Heart right ventricle (tissue), 16 donors: ENCODE measurements at regions of chr16 and their contacts with region 1.

Region 1: DNA sequence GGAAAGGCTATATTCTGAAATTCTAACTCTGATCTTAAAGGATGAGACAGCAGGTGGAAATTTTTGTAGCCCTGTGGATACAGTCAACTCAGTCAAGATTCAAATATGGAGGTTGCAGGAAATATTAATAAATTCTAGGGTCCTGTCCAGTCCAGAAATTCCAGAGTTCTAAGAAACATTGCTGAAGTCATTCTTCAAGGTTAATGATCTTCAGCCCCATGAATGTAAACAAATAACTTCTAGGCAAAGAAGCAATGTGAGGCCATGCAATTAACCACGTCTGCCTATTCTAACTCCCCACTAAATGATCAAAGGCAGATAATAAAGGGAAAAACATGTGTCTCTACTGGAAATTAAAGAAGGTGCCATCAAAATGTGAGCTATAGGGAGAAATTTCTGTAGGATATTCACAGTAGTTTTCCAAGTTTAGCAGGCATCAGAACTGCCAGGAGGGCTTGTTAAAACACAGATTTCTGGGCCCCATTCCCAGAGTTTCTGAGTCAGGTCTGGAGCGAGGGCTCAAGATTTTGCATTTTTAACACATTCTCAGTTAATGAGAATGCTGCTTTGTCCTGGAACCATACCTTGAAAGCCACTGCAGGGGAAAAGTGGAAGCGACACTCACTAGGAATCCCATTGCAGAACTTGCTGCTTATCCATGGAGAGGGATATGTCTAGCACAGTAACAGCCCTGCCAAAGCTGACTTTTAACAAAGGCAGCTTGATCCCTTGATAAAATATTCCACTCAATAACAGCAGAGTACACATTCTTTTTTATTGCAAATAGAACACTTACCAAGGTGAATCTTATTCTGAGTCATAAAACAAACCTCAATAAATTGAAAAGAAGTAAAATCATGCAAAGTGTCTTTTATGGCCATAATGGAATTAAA is 61.8 kb downstream of the DNAH3 start:
- DNase-seq: no peak
- ATAC-seq: no peak
- H3K4me3 ChIP-seq: no peak overlapping the region
- H3K27ac ChIP-seq: no peak overlapping the region
- H3K4me1 ChIP-seq: no peaks in the 10 kb centered on the region
- H3K27me3 ChIP-seq: no peaks in the 10 kb centered on the region
- CTCF ChIP-seq: no peak

Region 2: DNA sequence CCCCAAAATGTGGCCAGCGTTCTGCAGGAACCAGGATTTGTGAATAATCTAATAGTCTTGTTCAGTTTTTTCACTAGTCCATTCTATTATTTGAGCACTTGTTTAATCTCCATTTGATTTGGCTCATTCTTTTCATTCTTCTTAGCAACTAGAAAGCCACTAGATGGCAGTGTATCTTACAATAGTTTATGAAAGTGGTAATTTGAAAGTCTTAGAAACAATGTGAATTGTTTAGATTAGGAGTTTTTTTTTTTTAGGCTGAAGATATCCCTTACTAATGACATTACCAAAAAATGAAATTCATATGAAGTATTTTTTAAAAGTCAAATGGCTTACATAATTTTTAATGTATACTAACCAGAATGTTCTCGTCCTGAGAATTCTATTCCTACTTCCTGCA is 289.3 kb before region 1 on chr16:
- intact Hi-C with region 1: loop called in 4 of 10 experiments (anchors 2 to 10 kb)
- DNase-seq: no peak
- ATAC-seq: peak in 1 of 8 donors; percentile 53
- H3K4me3 ChIP-seq: no peak overlapping the region
- H3K27ac ChIP-seq: no peak overlapping the region
- H3K4me1 ChIP-seq: peaks cover 0 to 10% (median 0%) of the 10 kb centered on the region in 9 donors
- H3K27me3 ChIP-seq: no peaks in the 10 kb centered on the region
- CTCF ChIP-seq: peak in 8 of 9 donors; percentile 35 to 73 (median 54)

Region 3: DNA sequence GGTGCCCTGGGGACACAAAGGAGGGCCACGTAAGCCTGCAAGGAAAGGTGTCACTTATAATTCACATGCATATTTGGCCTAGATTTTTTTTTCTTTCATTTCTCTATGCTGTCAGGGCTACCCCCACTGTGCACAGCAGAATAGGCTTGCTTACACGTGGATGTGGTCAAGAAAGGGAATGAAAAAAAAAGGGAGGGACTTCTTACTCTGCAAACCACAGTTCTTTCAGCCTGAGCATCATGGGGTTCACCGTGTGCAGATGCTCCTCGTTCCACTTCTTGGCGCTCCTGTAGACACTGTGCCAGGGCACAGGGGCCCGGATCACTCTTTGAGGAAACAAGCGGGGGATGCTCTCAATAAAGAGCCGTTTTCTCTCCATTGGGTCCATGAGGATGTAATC is 45.2 kb after region 1 on chr16:
- intact Hi-C with region 1: no loop called
- DNase-seq: no peak
- ATAC-seq: no peak
- H3K4me3 ChIP-seq: no peak overlapping the region
- H3K27ac ChIP-seq: no peak overlapping the region
- H3K4me1 ChIP-seq: no peaks in the 10 kb centered on the region
- H3K27me3 ChIP-seq: no peaks in the 10 kb centered on the region
- CTCF ChIP-seq: no peak

Region 4: DNA sequence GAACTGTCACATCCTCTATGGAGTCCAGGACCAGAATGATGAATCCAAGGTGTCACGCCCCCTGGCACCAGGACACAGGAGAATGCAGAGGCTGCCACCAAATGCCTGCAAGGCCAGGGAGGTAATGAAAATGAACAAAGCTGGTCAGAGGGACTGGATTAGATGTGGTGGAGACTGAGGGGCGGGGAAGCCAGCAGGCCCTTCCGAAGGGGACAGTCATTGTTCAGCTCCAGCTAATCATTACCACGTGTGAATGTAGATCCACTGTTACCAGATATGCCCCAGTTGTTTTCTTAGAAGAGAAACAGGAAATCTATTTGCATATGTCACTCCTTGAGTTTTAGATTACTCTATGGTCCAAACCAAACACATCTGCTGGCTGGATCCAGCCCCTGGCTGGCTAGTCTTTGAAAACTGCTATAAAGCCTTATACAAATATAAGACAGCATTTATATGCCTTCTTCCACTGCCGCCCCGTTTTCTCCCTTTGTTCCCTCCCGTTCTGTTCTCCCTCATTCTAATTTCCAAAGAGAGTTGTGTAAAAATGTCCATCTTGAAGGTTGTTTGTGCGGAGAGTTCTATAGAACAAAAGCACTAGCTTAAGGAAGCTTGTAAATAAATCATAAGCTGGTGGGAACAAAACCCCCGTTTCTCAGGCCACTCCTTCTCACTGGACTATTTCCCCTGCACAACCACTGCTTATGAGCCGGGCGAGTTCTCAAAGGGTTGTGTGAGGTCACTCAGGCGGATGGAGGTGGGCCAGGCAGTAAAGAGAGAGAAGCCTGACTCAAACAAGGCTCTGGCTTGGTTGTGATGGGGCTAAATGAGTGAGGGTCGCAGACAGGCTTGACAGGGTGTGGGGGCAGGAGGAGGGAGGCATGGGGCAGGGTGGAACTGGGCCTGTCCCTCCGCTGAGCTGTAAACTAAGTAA is 175.0 kb after region 1 on chr16:
- intact Hi-C with region 1: no loop called
- DNase-seq: peak; percentile 28 to 42
- ATAC-seq: peak in 6 of 8 donors; percentile 25 to 71 (median 60)
- H3K4me3 ChIP-seq: no peak overlapping the region
- H3K27ac ChIP-seq: peak overlapping the region in 8 of 10 donors; percentile 48 to 89 (median 82)
- H3K4me1 ChIP-seq: peaks cover 12 to 53% (median 25%) of the 10 kb centered on the region in 9 donors
- H3K27me3 ChIP-seq: no peaks in the 10 kb centered on the region
- CTCF ChIP-seq: no peak